ENCODE measurements at regions of chr5 and their contacts with region 1.

Region 1: GRCh38 chr5:157772127-157772526 is 28.6 kb downstream of the LSM11 start:
- DNase-seq: no peak
- H3K4me3 ChIP-seq: no peak overlapping the region
- H3K27ac ChIP-seq: no peak overlapping the region
- H3K4me1 ChIP-seq: no peaks in the 10 kb centered on the region
- H3K27me3 ChIP-seq: no peaks in the 10 kb centered on the region

Region 2: GRCh38 chr5:157563373-157563928 is 208.7 kb before region 1 on chr5:
- CTCF ChIA-PET with region 1: no interaction called
- POLR2A ChIA-PET with region 1: no interaction called
- DNase-seq: no peak
- H3K4me3 ChIP-seq: peak overlapping the region in 2 of 7 experiments; percentile 22 to 55
- H3K27ac ChIP-seq: no peak overlapping the region
- H3K4me1 ChIP-seq: peaks cover 9 to 13% (median 11%) of the 10 kb centered on the region in 4 experiments
- H3K27me3 ChIP-seq: no peaks in the 10 kb centered on the region

Region 3: GRCh38 chr5:157697453-157697852 is 74.7 kb before region 1 on chr5:
- CTCF ChIA-PET with region 1: no interaction called
- POLR2A ChIA-PET with region 1: no interaction called
- DNase-seq: no peak
- H3K4me3 ChIP-seq: no peak overlapping the region
- H3K27ac ChIP-seq: no peak overlapping the region
- H3K4me1 ChIP-seq: no peaks in the 10 kb centered on the region
- H3K27me3 ChIP-seq: no peaks in the 10 kb centered on the region

Region 4: DNA sequence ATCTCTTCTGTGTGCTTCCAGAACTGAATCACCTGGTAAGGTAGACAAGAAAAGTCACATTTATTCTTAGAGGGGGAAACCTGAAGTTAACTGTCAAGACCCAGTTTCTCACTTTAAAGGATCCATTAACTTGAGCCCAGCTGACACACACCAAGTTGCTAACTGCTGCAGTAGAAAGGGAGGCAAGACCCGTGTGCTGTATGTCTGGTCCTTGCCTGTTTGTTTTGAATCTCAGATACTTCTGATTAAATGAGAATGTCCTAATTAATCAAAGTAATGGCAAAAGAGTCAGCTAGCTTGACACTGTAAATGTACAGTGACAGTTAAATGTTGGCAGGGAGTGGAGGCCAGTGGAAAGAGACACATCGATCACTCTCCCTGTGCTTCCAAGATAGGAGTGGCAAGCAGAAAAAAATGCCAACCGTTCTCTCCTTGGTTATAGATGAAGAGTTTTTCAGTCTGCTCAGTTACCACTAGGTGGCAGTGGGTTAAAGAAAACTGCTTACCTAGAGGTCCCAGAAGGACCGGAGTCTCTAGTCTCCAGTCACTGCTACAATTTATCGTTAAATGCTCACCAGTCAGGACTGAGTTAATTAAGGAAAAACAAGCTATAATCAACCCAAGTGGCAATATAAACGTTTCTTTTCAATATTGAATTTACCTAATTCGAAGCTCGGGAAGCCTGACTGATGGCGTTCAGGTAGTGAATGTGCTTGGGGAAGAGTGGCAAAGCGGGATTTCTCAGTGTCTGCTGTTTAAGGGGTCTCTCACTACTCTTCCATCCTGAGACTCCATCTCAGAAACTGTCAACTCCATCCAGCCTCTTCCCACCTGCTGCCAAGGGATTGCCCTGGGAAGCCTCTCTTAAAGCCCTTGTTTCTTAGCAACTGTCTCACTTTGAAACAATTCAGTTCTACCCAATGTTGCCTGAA is 10.2 kb before region 1 on chr5:
- CTCF ChIA-PET with region 1: interaction called, 46 read pairs
- POLR2A ChIA-PET with region 1: no interaction called
- DNase-seq: peak; percentile 63 to 72 (median 69)
- H3K4me3 ChIP-seq: no peak overlapping the region
- H3K27ac ChIP-seq: no peak overlapping the region
- H3K4me1 ChIP-seq: peaks cover 0 to 3% (median 0%) of the 10 kb centered on the region in 4 experiments
- H3K27me3 ChIP-seq: no peaks in the 10 kb centered on the region

Measured in common myeloid progenitor, CD34-positive (primary cell).